ENCODE measurements at regions of chr15 and their contacts with region 1.

Region 1: DNA sequence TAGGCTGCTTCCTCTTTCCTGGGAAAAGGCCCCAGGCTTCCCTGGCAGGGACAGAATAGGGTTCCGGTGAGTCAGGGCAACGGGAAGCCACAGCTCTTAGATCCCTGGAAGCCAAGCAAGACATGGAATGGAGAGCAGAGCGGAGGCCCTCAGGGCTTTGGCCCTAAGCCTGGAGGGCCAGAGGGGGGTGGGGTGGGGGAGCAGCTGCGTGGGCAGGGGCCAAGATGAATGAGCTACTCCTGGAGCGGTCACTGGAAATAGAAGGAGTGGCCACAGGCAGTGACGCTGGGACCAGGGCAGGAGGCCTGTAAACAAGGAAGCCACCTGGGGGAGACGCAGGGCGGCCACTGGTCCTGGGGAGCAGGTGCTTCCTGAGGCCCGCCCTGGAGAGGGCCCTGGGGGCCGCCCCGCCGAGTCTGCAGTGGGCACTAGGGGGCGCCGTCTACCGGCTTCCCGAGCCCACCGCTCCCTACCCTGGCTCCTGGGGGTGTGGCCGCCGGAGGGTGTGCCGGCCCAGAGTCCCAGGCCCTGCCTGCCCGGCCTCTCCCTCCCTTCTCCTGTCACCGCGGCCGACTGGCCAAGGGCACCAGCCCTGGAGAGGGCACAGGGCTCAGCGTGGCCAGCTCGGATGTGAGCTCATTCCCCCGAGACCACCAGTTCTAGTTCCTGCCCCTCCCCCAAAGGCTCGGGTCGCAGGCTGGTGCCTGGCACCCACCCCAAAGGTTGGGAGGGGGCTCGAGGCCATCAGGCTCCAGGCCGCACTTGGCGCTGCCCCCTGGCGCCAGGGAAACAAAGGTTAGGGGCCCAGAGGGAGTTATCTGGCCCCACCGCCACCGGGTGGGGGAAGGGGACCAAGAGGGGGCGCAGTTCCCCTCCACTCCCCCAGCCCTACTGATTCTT is 12.1 kb downstream of the VPS18 start:
- DNase-seq: peak; percentile 65
- H3K4me3 ChIP-seq: peak overlapping the region; percentile 41
- CTCF ChIP-seq: peak; percentile 87

Region 2: DNA sequence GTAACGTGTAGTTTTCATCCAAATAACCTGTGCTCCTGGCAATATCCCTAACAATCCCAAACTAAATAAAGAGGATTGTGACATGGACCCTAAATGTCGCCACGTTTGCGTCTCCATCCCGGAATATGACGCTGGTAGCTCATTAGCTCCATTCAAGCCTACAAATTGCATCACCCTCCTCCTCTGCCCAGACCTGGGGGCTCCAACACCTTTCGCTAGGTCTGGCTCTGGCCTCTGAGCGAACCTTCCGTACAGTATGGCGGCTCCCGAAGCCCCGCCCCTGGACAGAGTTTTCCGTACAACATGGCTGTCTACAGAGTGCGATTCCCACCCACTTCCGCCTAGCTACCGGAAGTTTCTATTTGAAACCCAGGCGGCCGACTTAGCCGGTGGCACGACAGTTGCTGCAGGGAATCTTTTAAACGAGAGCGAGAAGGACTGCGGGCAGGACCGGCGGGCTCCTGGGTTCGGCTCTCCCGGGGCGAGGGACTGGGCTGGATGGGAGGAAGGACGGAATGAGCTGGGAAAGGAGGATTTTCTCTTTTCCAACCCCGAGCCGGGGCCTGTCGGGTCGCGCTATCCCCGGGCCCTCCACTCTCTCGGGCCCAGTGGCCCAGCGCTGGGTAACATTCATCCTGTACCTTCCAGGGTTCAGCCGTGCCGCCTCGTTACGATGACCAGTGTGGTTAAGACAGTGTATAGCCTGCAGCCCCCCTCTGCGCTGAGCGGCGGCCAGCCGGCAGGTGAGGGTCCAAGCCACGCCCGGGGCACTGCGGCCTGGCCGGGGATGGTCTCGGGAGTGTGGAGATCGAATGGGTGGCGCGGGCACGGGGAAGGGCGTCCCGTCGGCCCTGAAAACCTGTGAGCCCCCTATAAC is 523.5 kb before region 1 on chr15 and contains the start of gene KNSTRN:
- CTCF ChIA-PET with region 1: no interaction called
- POLR2A ChIA-PET with region 1: no interaction called
- DNase-seq: peak; percentile 67
- H3K4me3 ChIP-seq: peak within 1 kb of the TSS; percentile 89
- CTCF ChIP-seq: no peak

Region 3: GRCh38 chr15:40928821-40929659 is 22.7 kb after region 1 on chr15 and contains the start of gene DLL4:
- CTCF ChIA-PET with region 1: interaction called, 109 read pairs
- POLR2A ChIA-PET with region 1: no interaction called
- DNase-seq: no peak
- H3K4me3 ChIP-seq: peak within 1 kb of the TSS; percentile 48
- CTCF ChIP-seq: no peak

Region 4: DNA sequence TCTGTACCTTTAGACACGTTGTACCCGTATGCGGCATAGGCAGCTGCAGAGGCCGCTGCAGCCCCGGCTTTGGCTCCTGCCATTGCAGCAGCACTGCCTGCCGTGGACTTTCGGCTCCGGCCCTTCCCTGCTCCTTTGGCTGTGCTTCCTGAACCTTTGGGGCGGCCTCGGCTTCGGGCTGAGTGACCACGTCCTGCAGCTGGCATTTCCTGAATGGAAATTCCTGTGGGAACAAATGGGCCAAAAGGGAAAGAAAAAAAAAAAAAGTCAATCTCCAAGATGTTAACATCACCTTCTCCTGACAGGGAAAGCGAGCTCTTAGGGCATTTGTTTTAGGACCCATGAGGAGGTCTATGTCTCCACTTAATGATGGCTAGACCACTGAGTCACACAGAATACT is 76.5 kb after region 1 on chr15:
- CTCF ChIA-PET with region 1: interaction called, 31 read pairs
- POLR2A ChIA-PET with region 1: interaction called, 3 read pairs
- DNase-seq: peak; percentile 29
- H3K4me3 ChIP-seq: no peak overlapping the region
- CTCF ChIP-seq: no peak

Region 5: GRCh38 chr15:41013698-41014414 is 107.5 kb after region 1 on chr15:
- CTCF ChIA-PET with region 1: interaction called, 498 read pairs
- POLR2A ChIA-PET with region 1: no interaction called
- DNase-seq: peak; percentile 44
- H3K4me3 ChIP-seq: no peak overlapping the region
- CTCF ChIP-seq: no peak

Region 6: DNA sequence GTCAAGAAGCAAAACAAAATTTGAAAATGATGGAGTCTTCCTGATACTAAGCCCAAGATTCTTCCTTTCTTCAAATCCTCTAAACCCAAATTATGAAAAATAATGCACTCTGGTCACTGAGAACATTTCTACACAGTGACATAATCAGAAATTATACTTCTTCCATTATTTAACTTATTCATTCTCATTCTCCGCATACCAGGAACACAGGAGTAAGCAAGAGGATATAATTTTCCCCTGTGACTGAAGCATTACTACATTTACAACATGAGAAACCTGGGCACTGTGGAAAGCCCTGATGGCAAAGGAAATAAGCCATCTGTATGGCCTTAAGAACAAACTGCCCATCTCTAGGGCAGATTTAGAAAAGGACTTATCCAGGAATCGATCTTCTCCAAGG is 277.2 kb after region 1 on chr15:
- CTCF ChIA-PET with region 1: interaction called, 14 read pairs
- POLR2A ChIA-PET with region 1: no interaction called
- DNase-seq: no peak
- H3K4me3 ChIP-seq: no peak overlapping the region
- CTCF ChIP-seq: no peak

Region 7: GRCh38 chr15:41367418-41367817 is 461.1 kb after region 1 on chr15:
- CTCF ChIA-PET with region 1: no interaction called
- POLR2A ChIA-PET with region 1: no interaction called
- DNase-seq: no peak
- H3K4me3 ChIP-seq: no peak overlapping the region
- CTCF ChIP-seq: no peak